CD4-positive, alpha-beta memory T cell (primary cell): ENCODE measurements at regions of chr17 and their contacts with region 1.

Region 1: GRCh38 chr17:64145757-64146417 is 15.9 kb upstream of the ERN1 start:
- DNase-seq: peak; percentile 95 to 99 (median 97)
- H3K4me3 ChIP-seq: peak overlapping the region; percentile 77 to 95
- H3K4me3 Mint-ChIP-seq: no peak overlapping the region
- H3K27ac ChIP-seq: peak overlapping the region; percentile 87
- H3K27ac Mint-ChIP-seq: no peak overlapping the region
- H3K4me1 ChIP-seq: peaks cover 22% of the 10 kb centered on the region
- H3K4me1 Mint-ChIP-seq: peaks cover 15 to 30% (median 21%) of the 10 kb centered on the region in 4 donors
- H3K27me3 ChIP-seq: no peaks in the 10 kb centered on the region
- H3K27me3 Mint-ChIP-seq: no peaks in the 10 kb centered on the region

Region 2: DNA sequence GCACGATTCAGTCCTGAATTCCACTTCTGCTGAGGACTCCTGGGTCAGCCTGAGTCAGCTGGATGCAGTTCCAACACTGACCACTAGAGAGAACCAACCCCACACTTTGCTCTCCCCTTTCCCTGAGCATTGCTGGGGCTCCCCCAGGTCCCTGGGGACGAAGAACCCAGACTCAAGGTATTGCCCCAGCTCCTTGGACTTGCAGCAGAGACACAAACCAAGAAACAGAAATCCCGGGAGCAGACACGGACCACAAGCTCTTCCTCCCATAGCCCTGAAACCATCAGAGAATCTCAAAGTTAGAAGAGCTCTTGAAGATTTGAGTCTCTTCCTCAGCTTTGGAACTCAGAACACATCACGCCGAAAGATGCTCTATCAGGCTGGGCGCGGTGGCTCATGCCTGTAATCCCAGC is 226.6 kb before region 1 on chr17:
- CTCF ChIA-PET with region 1: interaction called, 6 read pairs
- POLR2A ChIA-PET with region 1: interaction called, 10 read pairs
- intact Hi-C with region 1: no loop called
- DNase-seq: peak; percentile 70 to 81 (median 75)
- H3K4me3 ChIP-seq: no peak overlapping the region
- H3K4me3 Mint-ChIP-seq: no peak overlapping the region
- H3K27ac ChIP-seq: no peak overlapping the region
- H3K27ac Mint-ChIP-seq: peak overlapping the region in 6 of 7 donors; percentile 38 to 87 (median 62)
- H3K4me1 ChIP-seq: peaks cover 7% of the 10 kb centered on the region
- H3K4me1 Mint-ChIP-seq: peaks cover 6% of the 10 kb centered on the region in 4 donors
- H3K27me3 ChIP-seq: no peaks in the 10 kb centered on the region
- H3K27me3 Mint-ChIP-seq: peaks cover 0 to 2% of the 10 kb centered on the region in 2 donors

Region 3: GRCh38 chr17:63998050-63998720 is 147.7 kb before region 1 on chr17 and contains the start of gene PRR29:
- CTCF ChIA-PET with region 1: interaction called, 4 read pairs
- POLR2A ChIA-PET with region 1: interaction called, 17 read pairs
- intact Hi-C with region 1: no loop called
- DNase-seq: peak; percentile 70 to 81 (median 75)
- H3K4me3 ChIP-seq: peak within 1 kb of the TSS; percentile 5 to 76
- H3K4me3 Mint-ChIP-seq: peak within 1 kb of the TSS; percentile 87 to 94 (median 88)
- H3K27ac ChIP-seq: peak within 1 kb of the TSS; percentile 39
- H3K27ac Mint-ChIP-seq: peak within 1 kb of the TSS; percentile 60 to 91 (median 87)
- H3K4me1 ChIP-seq: peaks cover 46% of the 10 kb centered on the region
- H3K4me1 Mint-ChIP-seq: peaks cover 32 to 69% (median 42%) of the 10 kb centered on the region in 4 donors
- H3K27me3 ChIP-seq: no peaks in the 10 kb centered on the region
- H3K27me3 Mint-ChIP-seq: no peaks in the 10 kb centered on the region
- total RNA-seq, gene PRR29: 0.19 to 1.0 TPM

Region 4: GRCh38 chr17:64063766-64064224 is 82.1 kb before region 1 on chr17:
- CTCF ChIA-PET with region 1: interaction called, 4 read pairs
- POLR2A ChIA-PET with region 1: interaction called, 11 read pairs
- intact Hi-C with region 1: no loop called
- DNase-seq: peak; percentile 39 to 74 (median 54)
- H3K4me3 ChIP-seq: no peak overlapping the region
- H3K4me3 Mint-ChIP-seq: peak overlapping the region; percentile 67 to 92 (median 88)
- H3K27ac ChIP-seq: peak overlapping the region; percentile 41
- H3K27ac Mint-ChIP-seq: peak overlapping the region; percentile 7 to 97 (median 92)
- H3K4me1 ChIP-seq: peaks cover 89% of the 10 kb centered on the region
- H3K4me1 Mint-ChIP-seq: peaks cover 48 to 100% (median 77%) of the 10 kb centered on the region in 4 donors
- H3K27me3 ChIP-seq: no peaks in the 10 kb centered on the region
- H3K27me3 Mint-ChIP-seq: no peaks in the 10 kb centered on the region

Region 5: DNA sequence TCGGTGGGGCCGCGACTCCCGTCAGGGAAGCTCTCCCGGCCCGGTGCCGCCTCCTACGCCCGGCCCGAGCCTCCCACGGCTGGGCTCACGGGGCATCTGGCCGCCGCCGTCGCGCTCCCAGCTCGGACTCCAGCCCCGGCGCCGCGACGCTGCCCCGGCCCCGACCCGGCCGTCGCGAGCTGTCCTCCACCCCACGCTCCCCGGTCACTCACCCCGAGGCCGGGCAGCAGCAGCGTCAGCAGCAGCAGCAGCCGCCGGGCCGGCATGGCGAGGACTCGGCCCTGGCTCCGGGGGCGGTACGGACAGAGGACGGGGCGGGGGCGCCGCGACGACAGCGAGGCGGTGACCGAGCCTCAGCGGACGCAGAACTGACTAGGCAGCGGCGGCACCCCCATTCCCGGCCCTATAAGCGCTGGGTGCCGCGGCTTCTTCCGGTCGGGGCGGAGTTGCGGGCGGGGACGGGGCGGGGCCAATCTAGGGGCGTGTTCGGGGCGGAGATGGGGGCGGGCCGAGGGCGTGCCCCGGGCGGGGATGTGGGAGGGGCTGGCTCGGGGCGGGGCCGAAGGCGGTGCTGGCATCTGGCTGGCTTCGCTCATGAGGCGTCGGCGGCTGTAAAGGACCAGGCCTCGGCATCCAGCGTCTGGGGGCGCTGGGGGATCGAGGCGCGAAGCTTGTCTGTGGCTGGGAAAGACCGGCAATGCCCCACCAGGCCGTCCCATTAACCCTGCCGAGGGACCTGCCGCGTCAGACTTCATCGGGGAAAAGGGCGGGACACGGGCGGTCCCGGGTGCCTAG is 15.9 kb before region 1 on chr17 and contains the start of gene ERN1:
- CTCF ChIA-PET with region 1: interaction called, 35 read pairs
- POLR2A ChIA-PET with region 1: interaction called, 211 read pairs
- intact Hi-C with region 1: loop called (anchors 1 kb)
- DNase-seq: peak; percentile 90 to 92 (median 90)
- H3K4me3 ChIP-seq: peak within 1 kb of the TSS; percentile 76 to 86
- H3K4me3 Mint-ChIP-seq: peak within 1 kb of the TSS; percentile 95 to 99 (median 98)
- H3K27ac ChIP-seq: peak within 1 kb of the TSS; percentile 86
- H3K27ac Mint-ChIP-seq: peak within 1 kb of the TSS; percentile 96 to 99 (median 98)
- H3K4me1 ChIP-seq: peaks cover 56% of the 10 kb centered on the region
- H3K4me1 Mint-ChIP-seq: peaks cover 33 to 61% (median 45%) of the 10 kb centered on the region in 4 donors
- H3K27me3 ChIP-seq: no peaks in the 10 kb centered on the region
- H3K27me3 Mint-ChIP-seq: no peaks in the 10 kb centered on the region
- total RNA-seq, gene ERN1: 163 to 172 TPM

Region 6: DNA sequence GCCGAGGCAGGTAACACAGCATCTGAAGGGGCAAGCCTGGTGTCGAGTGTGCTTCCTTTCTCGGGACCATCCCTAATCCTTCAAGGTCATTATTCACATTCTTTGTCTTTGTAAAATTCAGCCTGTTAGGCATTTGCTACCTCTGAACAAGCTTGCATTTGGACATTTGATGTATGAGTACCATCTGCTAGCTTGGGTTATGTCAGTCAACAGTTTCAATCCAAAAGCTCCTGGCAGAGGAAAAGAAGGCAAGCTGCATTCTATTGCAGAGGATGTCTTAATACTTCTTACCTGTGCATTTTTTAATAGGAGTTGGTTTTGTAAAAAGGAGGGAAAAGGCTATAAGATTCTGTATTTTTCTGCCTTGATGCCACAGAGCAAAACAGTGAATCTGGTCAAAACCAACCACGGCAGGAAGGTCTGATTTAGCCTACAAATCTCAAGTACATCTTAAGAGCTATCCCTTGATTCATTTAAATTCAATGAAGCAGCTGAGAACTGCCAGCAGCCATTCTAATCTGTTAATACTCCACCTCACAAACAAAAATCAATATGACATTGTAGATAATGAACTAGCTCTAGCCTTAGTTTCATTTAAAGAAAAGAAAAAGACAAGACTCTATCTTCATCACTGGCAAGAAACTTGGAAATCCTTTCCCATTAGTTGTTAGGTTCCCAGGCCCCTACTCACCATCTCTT is 78.2 kb after region 1 on chr17:
- CTCF ChIA-PET with region 1: no interaction called
- POLR2A ChIA-PET with region 1: no interaction called
- intact Hi-C with region 1: no loop called
- DNase-seq: no peak
- H3K4me3 ChIP-seq: no peak overlapping the region
- H3K4me3 Mint-ChIP-seq: no peak overlapping the region
- H3K27ac ChIP-seq: no peak overlapping the region
- H3K27ac Mint-ChIP-seq: peak overlapping the region in 2 of 7 donors; percentile 2 to 19
- H3K4me1 ChIP-seq: no peaks in the 10 kb centered on the region
- H3K4me1 Mint-ChIP-seq: peaks cover 3 to 10% (median 5%) of the 10 kb centered on the region in 4 donors
- H3K27me3 ChIP-seq: no peaks in the 10 kb centered on the region
- H3K27me3 Mint-ChIP-seq: no peaks in the 10 kb centered on the region

Region 7: DNA sequence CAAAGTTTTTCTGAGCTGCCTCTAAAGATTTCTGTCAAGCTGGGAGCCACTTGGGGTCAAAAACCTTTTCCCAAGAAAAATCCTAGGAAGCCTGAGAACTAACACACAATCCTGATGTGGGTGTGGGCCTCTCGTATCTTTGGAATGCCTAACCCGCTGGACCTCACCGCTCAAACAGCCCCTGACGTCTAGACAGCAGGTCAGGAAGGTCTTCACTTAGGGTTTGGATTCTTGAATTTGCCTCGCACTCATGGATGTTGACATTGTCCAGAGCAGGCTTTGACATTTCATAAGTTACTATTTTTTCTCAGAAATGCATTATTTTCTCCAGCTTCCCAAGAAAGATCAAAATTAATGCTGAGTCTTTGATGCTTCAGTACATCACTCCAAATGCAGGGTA is 98.3 kb after region 1 on chr17:
- CTCF ChIA-PET with region 1: no interaction called
- POLR2A ChIA-PET with region 1: no interaction called
- intact Hi-C with region 1: no loop called
- DNase-seq: no peak
- H3K4me3 ChIP-seq: no peak overlapping the region
- H3K4me3 Mint-ChIP-seq: no peak overlapping the region
- H3K27ac ChIP-seq: no peak overlapping the region
- H3K27ac Mint-ChIP-seq: no peak overlapping the region
- H3K4me1 ChIP-seq: no peaks in the 10 kb centered on the region
- H3K4me1 Mint-ChIP-seq: peaks cover 0 to 5% (median 3%) of the 10 kb centered on the region in 4 donors
- H3K27me3 ChIP-seq: no peaks in the 10 kb centered on the region
- H3K27me3 Mint-ChIP-seq: no peaks in the 10 kb centered on the region

Region 8: GRCh38 chr17:64506576-64507477 is 360.9 kb after region 1 on chr17 and contains the start of gene CEP95:
- CTCF ChIA-PET with region 1: no interaction called
- POLR2A ChIA-PET with region 1: interaction called, 41 read pairs
- intact Hi-C with region 1: loop called (anchors 1 kb)
- DNase-seq: peak in 3 of 5 donors; percentile 92 to 98 (median 97)
- H3K4me3 ChIP-seq: peak within 1 kb of the TSS; percentile 89 to 97
- H3K4me3 Mint-ChIP-seq: peak within 1 kb of the TSS; percentile 95 to 100 (median 100)
- H3K27ac ChIP-seq: peak within 1 kb of the TSS; percentile 98
- H3K27ac Mint-ChIP-seq: peak within 1 kb of the TSS; percentile 98 to 100 (median 100)
- H3K4me1 ChIP-seq: peaks cover 49% of the 10 kb centered on the region
- H3K4me1 Mint-ChIP-seq: peaks cover 43 to 75% (median 56%) of the 10 kb centered on the region in 4 donors
- H3K27me3 ChIP-seq: no peaks in the 10 kb centered on the region
- H3K27me3 Mint-ChIP-seq: peaks cover 0 to 4% of the 10 kb centered on the region in 2 donors
- total RNA-seq, gene CEP95: 105 to 108 TPM